ENCODE measurements at regions of chr2 and their contacts with region 1.

Region 1: DNA sequence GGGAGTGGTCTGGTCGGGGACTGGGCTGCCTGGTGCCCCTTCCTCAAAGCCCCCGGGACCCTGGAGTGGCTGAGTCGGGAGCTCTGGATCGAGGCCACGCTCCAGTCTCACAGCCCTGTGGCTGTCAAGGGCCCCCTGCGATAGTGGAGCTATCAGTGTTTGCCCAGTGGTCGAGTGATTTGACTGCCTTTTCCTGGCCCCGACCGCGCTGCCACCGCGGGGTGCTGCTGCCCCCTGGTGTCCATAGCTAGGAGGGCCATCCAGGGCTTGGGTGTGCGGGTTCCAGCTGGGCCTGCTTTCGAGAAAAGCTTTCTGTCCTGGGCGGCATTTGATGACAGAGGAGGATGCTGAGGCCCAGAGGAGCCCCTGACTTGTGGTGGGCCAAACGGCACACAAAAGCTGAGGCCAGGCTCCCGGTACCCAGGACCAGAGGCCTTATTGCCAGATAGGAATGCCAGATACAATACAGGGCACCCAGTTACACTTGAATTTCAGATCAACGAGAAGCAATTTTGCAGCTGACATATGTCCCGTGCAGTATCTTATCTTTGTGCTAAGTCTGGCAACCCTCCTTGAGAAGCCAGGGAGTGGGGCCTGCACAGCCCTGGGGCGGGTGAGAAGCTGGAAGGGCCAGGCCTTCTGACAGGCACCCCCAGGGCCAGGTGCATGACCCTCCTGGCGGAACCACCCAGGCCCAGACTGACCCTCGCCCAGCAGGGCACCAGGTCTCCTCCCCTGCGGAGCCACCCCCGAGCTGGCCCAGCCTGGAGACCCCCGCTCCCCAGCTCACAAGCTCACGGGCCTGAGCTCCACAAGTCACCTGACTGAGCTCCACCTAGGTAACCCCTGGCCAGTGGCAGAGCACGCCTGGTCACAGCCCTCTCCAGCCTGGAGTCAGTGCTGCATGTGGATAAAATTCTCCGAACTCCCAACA is 13.0 kb downstream of the ODC1 start:
- DNase-seq: peak; percentile 87 to 91 (median 90)
- ATAC-seq: peak; percentile 88
- H3K4me3 ChIP-seq: no peak overlapping the region
- H3K27ac ChIP-seq: no peak overlapping the region
- H3K4me1 ChIP-seq: peaks cover 9 to 51% of the 10 kb centered on the region in 2 experiments
- H3K27me3 ChIP-seq: no peaks in the 10 kb centered on the region
- CTCF ChIP-seq: peak; percentile 95 to 97 (median 97)
- EP300 ChIP-seq: peak; percentile 51; the same call in 1 of the 2 replicates
- POLR2A ChIP-seq: no peak
- RAD21 ChIP-seq: peak; percentile 98 to 99

Region 2: DNA sequence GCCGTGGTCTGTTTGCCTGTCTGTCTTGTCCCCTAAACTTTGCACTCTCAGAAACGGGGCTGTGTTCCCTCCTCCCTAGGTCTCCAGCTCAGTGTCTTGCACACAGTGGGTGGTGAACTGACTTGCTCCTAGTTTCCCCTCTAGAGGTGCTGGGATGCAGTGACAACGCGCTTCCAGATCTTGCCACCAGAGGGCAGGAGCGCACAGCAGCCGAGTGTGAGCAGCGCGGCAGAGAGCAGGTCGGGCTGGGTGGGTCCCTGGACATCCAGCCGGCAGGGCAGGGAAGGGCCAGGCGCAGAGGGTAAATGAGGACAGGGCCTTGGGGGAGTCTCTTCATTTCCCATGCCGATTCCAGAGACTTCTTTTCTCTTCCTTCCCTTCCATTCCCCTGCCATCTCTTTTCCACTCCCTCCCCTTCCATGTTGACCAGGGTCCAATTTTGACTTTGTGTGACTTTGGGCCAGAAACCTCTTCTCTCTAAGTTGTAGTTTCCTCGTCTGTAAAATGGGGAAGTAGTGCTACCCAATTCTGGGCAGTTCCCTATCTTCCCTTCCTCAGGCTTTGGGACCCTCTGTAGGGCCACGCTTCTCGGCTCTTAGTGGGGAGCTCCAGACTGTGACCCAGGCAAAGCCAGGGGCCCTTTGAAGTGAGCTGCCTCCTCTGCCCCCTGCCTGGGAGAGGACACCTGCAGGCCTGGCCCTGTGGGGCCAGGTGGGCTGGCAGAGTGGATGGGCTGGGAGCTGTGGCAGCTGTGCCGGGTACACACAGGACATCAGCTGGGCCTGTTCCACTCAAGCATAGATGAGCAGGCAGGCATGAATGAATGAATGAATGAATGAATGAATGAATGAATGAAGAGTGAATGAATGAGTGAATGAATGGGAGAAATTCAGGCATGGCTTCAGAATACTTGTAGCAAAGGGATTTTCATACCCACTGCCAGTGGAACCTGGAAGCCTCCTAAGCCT is 635.2 kb before region 1 on chr2:
- CTCF ChIA-PET with region 1: no interaction called
- POLR2A ChIA-PET with region 1: no interaction called
- in situ Hi-C with region 1: loop called (anchors 10 kb)
- intact Hi-C with region 1: loop called (anchors 10 kb)
- DNase-seq: peak; percentile 87 to 91 (median 89)
- ATAC-seq: peak; percentile 95
- H3K4me3 ChIP-seq: no peak overlapping the region
- H3K27ac ChIP-seq: no peak overlapping the region
- H3K4me1 ChIP-seq: peaks cover 23 to 39% of the 10 kb centered on the region in 2 experiments
- H3K27me3 ChIP-seq: no peaks in the 10 kb centered on the region
- CTCF ChIP-seq: peak; percentile 98 to 99 (median 99)
- EP300 ChIP-seq: no peak; the same call in 1 of the 2 replicates
- POLR2A ChIP-seq: no peak
- RAD21 ChIP-seq: peak; percentile 95 to 97

Region 3: GRCh38 chr2:9857814-9858729 is 577.1 kb before region 1 on chr2:
- CTCF ChIA-PET with region 1: no interaction called
- POLR2A ChIA-PET with region 1: no interaction called
- in situ Hi-C with region 1: no loop called
- intact Hi-C with region 1: no loop called
- DNase-seq: no peak
- ATAC-seq: no peak
- H3K4me3 ChIP-seq: no peak overlapping the region
- H3K27ac ChIP-seq: no peak overlapping the region
- H3K4me1 ChIP-seq: no peaks in the 10 kb centered on the region
- H3K27me3 ChIP-seq: no peaks in the 10 kb centered on the region
- CTCF ChIP-seq: no peak
- EP300 ChIP-seq: no peak
- POLR2A ChIP-seq: no peak
- RAD21 ChIP-seq: no peak

Region 4: GRCh38 chr2:10122386-10123280 is 312.5 kb before region 1 on chr2 and contains the start of gene RRM2:
- CTCF ChIA-PET with region 1: interaction called, 21 read pairs
- POLR2A ChIA-PET with region 1: interaction called, 9 read pairs
- in situ Hi-C with region 1: loop called (anchors 5 kb)
- intact Hi-C with region 1: loop called (anchors 1 kb)
- DNase-seq: peak; percentile 95 to 98 (median 96)
- ATAC-seq: peak; percentile 87
- H3K4me3 ChIP-seq: peak within 1 kb of the TSS; percentile 84
- H3K27ac ChIP-seq: peak within 1 kb of the TSS; percentile 99
- H3K4me1 ChIP-seq: peaks cover 24 to 29% of the 10 kb centered on the region in 2 experiments
- H3K27me3 ChIP-seq: no peaks in the 10 kb centered on the region
- CTCF ChIP-seq: no peak
- EP300 ChIP-seq: no peak
- POLR2A ChIP-seq: peak; percentile 99
- RAD21 ChIP-seq: no peak
- polyA plus RNA-seq, gene RRM2: 50.1 to 50.7 TPM

Region 5: DNA sequence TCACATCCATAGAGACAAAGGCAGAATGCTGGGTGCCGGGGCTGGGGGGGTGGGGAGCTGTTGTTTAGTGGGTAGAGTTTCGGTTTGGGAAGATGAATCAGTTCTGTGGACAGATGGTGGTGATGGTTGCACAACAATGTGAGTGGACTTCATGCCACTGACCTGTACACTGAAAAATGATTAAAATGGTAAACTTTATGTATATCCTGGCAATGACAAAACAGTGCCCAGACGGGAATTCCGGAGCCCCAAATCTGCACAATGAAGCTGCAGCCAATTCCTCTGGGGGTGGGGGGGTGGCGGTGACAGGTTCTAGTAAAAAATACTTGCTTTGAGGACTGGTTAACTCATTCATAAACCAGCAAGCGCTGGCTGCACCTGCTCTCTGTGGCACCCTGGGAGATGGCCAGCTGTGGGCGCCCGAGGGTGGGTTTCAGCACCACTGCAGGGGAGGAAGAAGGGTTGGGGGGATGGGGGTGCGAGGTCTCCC is 214.2 kb before region 1 on chr2:
- CTCF ChIA-PET with region 1: no interaction called
- POLR2A ChIA-PET with region 1: interaction called, 4 read pairs
- in situ Hi-C with region 1: no loop called
- intact Hi-C with region 1: loop called (anchors 5 kb)
- DNase-seq: peak in 2 of 4 experiments; percentile 38 to 45
- ATAC-seq: peak; percentile 38; the same call in 1 of the 3 replicates
- H3K4me3 ChIP-seq: no peak overlapping the region
- H3K27ac ChIP-seq: no peak overlapping the region
- H3K4me1 ChIP-seq: peaks cover 5 to 31% of the 10 kb centered on the region in 2 experiments; a peak in 3 of 5 replicates
- H3K27me3 ChIP-seq: peaks cover 0 to 6% of the 10 kb centered on the region in 2 experiments; a peak in 1 of 5 replicates
- CTCF ChIP-seq: peak in 2 of 3 experiments; percentile 27 to 33; a peak in 2 of 6 replicates
- EP300 ChIP-seq: no peak
- POLR2A ChIP-seq: no peak
- RAD21 ChIP-seq: peak in 1 of 2 experiments; percentile 32; a peak in 1 of 4 replicates

Region 6: GRCh38 chr2:10408649-10409579 is 26.2 kb before region 1 on chr2:
- CTCF ChIA-PET with region 1: interaction called, 3 read pairs
- POLR2A ChIA-PET with region 1: interaction called, 11 read pairs
- in situ Hi-C with region 1: no loop called
- intact Hi-C with region 1: no loop called
- DNase-seq: peak; percentile 90 to 94 (median 93)
- ATAC-seq: peak; percentile 89
- H3K4me3 ChIP-seq: no peak overlapping the region
- H3K27ac ChIP-seq: peak overlapping the region; percentile 81
- H3K4me1 ChIP-seq: peaks cover 17 to 38% of the 10 kb centered on the region in 2 experiments; a peak in 4 of 5 replicates
- H3K27me3 ChIP-seq: no peaks in the 10 kb centered on the region
- CTCF ChIP-seq: peak; percentile 94 to 97 (median 97)
- EP300 ChIP-seq: peak; percentile 8; the same call in 1 of the 2 replicates
- POLR2A ChIP-seq: no peak
- RAD21 ChIP-seq: peak; percentile 93 to 96

Region 7: GRCh38 chr2:10659898-10660568 is 224.9 kb after region 1 on chr2:
- CTCF ChIA-PET with region 1: no interaction called
- POLR2A ChIA-PET with region 1: interaction called, 4 read pairs
- in situ Hi-C with region 1: no loop called
- intact Hi-C with region 1: loop called (anchors 2 kb)
- DNase-seq: peak; percentile 55 to 76 (median 67)
- ATAC-seq: peak; percentile 98
- H3K4me3 ChIP-seq: no peak overlapping the region
- H3K27ac ChIP-seq: no peak overlapping the region
- H3K4me1 ChIP-seq: peaks cover 0 to 3% of the 10 kb centered on the region in 2 experiments; a peak in 1 of 5 replicates
- H3K27me3 ChIP-seq: no peaks in the 10 kb centered on the region
- CTCF ChIP-seq: peak; percentile 68 to 93 (median 83)
- EP300 ChIP-seq: no peak
- POLR2A ChIP-seq: no peak
- RAD21 ChIP-seq: peak; percentile 83 to 89